ENCODE measurements at regions of chr6 and their contacts with region 1.

Region 1: GRCh38 chr6:132830334-132830751 is 16.0 kb downstream of the RPS12 start:
- DNase-seq: no peak
- H3K4me3 ChIP-seq: no peak overlapping the region
- H3K27ac ChIP-seq: no peak overlapping the region
- H3K4me1 ChIP-seq: peaks cover 0 to 8% (median 0%) of the 10 kb centered on the region in 4 donors
- H3K27me3 ChIP-seq: no peaks in the 10 kb centered on the region
- CTCF ChIP-seq: peak; percentile 41 to 58 (median 43)
- EP300 ChIP-seq: no peak
- POLR2A ChIP-seq: no peak

Region 2: DNA sequence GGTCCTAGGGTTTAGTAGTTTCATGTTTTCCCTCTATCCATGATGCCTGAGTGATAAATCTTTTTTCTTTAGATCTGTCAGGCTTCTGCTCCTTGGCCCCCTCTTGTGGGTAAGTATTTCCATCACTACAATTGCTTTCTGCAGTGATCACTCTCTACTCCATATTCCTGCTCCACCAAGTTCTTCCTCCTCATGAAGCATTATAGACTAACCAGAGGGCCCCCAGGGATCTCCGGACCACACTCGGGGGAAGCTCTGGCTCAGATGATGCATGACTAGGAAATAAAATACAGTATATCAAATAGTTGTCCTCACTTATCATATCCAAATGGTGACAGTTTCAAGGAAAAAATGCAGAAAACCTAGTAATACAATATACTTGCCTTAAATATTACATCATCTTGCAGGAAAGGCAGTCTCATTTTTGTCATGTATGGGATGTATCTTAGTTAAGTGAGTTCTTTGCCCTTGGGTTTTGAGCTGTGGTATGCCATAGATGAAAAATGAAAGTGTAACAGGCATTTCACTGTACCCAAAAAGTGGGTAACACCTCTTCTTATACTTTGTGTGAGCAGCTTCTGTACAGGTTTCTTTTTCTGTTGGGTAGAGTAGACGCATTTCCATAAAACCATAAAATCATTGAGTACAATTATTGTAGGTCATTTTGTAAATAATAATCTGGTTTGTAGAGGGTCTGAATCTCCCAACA is 209.9 kb after region 1 on chr6:
- intact Hi-C with region 1: loop called (anchors 10 kb)
- DNase-seq: no peak
- H3K4me3 ChIP-seq: no peak overlapping the region
- H3K27ac ChIP-seq: no peak overlapping the region
- H3K4me1 ChIP-seq: no peaks in the 10 kb centered on the region
- H3K27me3 ChIP-seq: no peaks in the 10 kb centered on the region
- CTCF ChIP-seq: peak in 2 of 3 experiments; percentile 14 to 24
- EP300 ChIP-seq: no peak
- POLR2A ChIP-seq: no peak

Region 3: DNA sequence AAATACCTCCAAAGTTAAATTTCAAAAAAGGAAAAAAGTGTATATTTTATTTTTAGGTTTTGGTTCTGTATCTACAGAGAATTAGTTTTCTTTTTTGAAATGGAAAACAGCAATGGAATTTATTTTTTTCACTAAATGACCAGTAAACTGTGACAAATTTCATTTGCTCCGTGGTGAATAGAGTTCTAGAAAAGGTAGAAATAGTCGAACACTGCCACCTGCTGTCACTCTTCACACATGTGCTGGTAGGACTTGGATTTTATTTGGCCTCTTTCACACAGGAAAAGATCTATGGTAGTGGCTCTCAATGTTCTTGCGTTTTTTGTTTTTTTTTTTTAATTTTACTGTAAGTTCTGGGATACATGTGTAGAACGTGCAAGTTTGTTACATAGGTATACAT is 723.3 kb after region 1 on chr6:
- intact Hi-C with region 1: loop called (anchors 5 kb)
- DNase-seq: no peak
- H3K4me3 ChIP-seq: no peak overlapping the region
- H3K27ac ChIP-seq: no peak overlapping the region
- H3K4me1 ChIP-seq: peaks cover 0 to 29% (median 27%) of the 10 kb centered on the region in 4 donors
- H3K27me3 ChIP-seq: no peaks in the 10 kb centered on the region
- CTCF ChIP-seq: peak; percentile 57 to 69 (median 62)
- EP300 ChIP-seq: no peak
- POLR2A ChIP-seq: no peak

Measured in esophagus muscularis mucosa (tissue), 4 donors.